GM10248 (cell line): ENCODE measurements at regions of chr9 and their contacts with region 1.

Region 1: GRCh38 chr9:93003552-93004407 is 54.7 kb upstream of the SUSD3 start:
- DNase-seq: peak; percentile 82
- CTCF ChIP-seq: peak; percentile 59

Region 2: GRCh38 chr9:92664361-92665152 is 339.2 kb before region 1 on chr9:
- CTCF ChIA-PET with region 1: no interaction called
- POLR2A ChIA-PET with region 1: no interaction called
- DNase-seq: peak; percentile 59
- CTCF ChIP-seq: no peak

Region 3: GRCh38 chr9:92992549-92992948 is 11.2 kb before region 1 on chr9:
- CTCF ChIA-PET with region 1: interaction called, 31 read pairs
- POLR2A ChIA-PET with region 1: no interaction called
- DNase-seq: no peak
- CTCF ChIP-seq: no peak

Region 4: GRCh38 chr9:93013856-93014582 is 10.2 kb after region 1 on chr9:
- CTCF ChIA-PET with region 1: interaction called, 59 read pairs
- POLR2A ChIA-PET with region 1: no interaction called
- DNase-seq: no peak
- CTCF ChIP-seq: no peak

Region 5: GRCh38 chr9:93028448-93029006 is 24.7 kb after region 1 on chr9:
- CTCF ChIA-PET with region 1: interaction called, 28 read pairs
- POLR2A ChIA-PET with region 1: no interaction called
- DNase-seq: peak; percentile 54
- CTCF ChIP-seq: no peak

Region 6: DNA sequence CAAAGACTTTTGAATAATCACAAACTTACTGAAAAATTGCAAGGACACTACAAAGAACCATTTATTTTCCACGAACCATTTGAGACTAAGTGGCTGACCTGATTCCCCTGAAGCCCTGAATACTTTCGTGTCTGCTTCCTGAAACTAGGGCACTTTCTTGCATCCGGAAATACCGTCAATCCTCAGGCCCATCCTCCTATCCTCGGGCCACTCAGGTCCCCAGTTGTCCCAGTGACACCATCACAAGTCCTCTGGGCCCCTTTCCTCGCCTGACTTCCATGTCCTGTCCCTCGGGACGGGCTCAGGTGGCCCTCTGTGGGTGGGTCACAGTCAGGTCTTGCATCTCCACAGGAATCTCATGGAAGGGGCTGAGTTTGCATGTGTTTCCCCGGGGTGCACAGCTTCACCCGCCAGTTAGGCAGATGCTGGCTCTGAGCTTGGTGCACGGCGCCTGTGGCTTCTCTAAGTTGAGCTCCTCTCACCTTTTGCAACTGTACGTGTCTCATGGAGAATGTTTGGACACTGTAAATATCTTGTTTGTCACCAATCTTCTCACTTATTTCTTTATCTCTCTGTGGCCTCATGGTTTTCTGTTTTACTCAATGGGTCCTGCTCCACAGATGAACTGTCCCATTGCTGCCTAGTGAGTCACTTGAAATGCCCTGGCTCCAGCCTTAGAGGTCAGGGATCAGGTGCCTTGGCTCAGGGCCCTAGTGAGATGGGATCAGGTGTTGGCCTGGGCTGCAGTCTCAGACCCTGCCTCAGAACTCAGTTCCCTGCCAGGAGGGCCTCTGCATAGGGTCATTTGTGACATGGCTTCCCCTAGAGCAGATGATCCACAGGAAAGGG is 241.6 kb after region 1 on chr9:
- CTCF ChIA-PET with region 1: no interaction called
- POLR2A ChIA-PET with region 1: no interaction called
- DNase-seq: no peak
- CTCF ChIP-seq: no peak